Stomach (tissue), 19 donors: ENCODE measurements at regions of chr18 and their contacts with region 1.

Region 1: GRCh38 chr18:12934454-12935071 is 13.2 kb upstream of the SEH1L start:
- DNase-seq: peak; percentile 83 to 94
- H3K4me3 ChIP-seq: no peak overlapping the region
- H3K27ac ChIP-seq: no peak overlapping the region
- H3K4me1 ChIP-seq: peaks cover 0 to 7% (median 3%) of the 10 kb centered on the region in 4 donors
- H3K27me3 ChIP-seq: no peaks in the 10 kb centered on the region
- CTCF ChIP-seq: peak in 5 of 7 experiments; percentile 62 to 93 (median 82)
- EP300 ChIP-seq: no peak
- POLR2A ChIP-seq: no peak

Region 2: DNA sequence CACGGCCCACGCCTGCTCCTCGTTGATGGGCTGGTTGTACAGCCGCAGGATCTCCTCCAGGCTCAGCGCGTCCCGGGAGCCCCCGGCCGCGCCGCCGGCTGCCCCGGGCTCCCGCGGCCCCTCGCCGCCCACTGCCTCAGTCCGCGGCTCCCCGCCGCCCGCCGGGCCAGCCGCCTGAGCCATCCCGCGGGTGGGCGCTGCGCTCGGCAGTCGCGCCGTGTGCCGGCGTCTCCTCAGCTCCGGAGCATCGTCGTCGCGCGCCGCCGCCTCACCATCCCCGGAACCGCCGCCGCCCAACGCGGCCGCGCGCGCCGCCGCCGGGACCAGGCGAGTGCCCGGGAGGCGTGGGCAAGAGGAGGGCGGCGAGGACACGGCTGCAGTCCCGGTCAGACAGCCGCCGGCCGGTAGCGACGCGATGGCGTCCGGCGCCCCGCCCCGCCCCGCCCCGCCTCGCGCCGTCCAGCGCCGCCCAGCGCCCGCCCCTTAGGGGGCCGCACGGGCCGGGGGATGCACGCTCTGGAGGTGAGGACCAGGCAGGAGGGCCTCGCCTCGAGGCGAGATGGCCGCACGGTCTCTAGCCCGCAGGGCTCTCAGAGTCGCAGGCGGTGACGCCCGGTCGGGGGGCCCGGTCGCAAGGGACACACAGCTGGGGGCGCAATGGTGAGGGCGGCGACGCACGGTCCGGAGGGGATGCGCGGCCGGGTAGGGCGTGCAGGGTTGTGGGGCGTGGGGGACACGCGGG is 276.7 kb before region 1 on chr18 and contains the start of gene SPIRE1:
- intact Hi-C with region 1: no loop called
- DNase-seq: peak; percentile 76 to 87
- H3K4me3 ChIP-seq: peak within 1 kb of the TSS; percentile 74 to 90 (median 82)
- H3K27ac ChIP-seq: peak within 1 kb of the TSS; percentile 90 to 97 (median 94)
- H3K4me1 ChIP-seq: peaks cover 10 to 52% (median 25%) of the 10 kb centered on the region in 4 donors
- H3K27me3 ChIP-seq: no peaks in the 10 kb centered on the region
- CTCF ChIP-seq: no peak
- EP300 ChIP-seq: no peak
- POLR2A ChIP-seq: no peak
- total RNA-seq, gene SPIRE1: 4.1 to 24.4 (median 23.7) TPM

Region 3: GRCh38 chr18:12726774-12727550 is 207.6 kb before region 1 on chr18:
- intact Hi-C with region 1: loop called (anchors 5 kb)
- DNase-seq: peak; percentile 40 to 86
- H3K4me3 ChIP-seq: no peak overlapping the region
- H3K27ac ChIP-seq: no peak overlapping the region
- H3K4me1 ChIP-seq: no peaks in the 10 kb centered on the region
- H3K27me3 ChIP-seq: no peaks in the 10 kb centered on the region
- CTCF ChIP-seq: peak in 5 of 7 experiments; percentile 90 to 94 (median 92)
- EP300 ChIP-seq: no peak
- POLR2A ChIP-seq: no peak